ENCODE measurements at regions of chr1 and their contacts with region 1.

Region 1: DNA sequence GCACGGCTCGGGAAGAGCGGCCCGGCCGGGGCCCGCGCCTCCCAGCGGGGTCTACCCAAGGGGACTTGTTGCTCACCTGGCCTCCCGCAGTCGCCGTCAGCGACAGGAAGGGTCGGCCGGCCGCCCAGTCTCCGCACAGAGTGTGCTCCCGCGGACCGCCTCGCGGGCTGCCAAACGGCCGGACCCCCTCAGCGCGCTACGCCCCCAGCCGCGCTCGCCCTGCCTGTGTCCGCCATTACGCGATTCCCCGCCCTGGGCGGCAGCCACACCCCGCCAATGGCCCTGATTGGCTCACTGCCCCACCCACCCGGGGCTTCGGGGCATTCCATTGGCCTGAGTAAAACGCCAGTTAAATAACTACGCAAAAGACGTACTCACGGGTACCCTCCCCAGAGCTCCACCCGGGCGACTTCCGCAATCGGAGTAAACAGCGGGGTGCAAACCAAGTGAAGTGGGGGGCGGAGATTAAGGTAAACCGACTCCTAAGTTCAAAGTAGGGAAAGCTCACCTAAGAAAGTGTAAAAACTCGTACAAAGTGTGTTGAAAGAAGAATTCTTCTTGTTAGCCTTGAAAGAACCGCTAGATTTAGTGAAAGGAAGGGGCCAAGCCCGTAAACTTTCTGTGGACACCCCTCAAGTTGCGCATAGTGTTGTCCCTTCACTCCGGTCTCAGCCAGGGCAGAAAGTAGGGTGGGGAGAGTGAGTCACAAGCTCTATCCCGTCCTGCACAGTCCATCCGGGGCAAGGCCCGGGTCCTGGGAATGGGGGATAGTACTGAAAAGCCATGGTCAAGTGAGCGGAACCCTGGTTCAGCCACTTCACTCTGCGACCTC is at the start of gene WASF2:
- DNase-seq: peak; percentile 93 to 98 (median 95)
- ATAC-seq: peak; percentile 95
- H3K4me3 ChIP-seq: peak within 1 kb of the TSS; percentile 100
- H3K4me3 Mint-ChIP-seq: peak within 1 kb of the TSS; percentile 100
- H3K27ac ChIP-seq: peak within 1 kb of the TSS; percentile 73 to 98
- H3K27ac Mint-ChIP-seq: peak within 1 kb of the TSS; percentile 100
- H3K4me1 ChIP-seq: peaks cover 28% of the 10 kb centered on the region
- H3K4me1 Mint-ChIP-seq: peaks cover 29% of the 10 kb centered on the region
- H3K27me3 ChIP-seq: no peaks in the 10 kb centered on the region
- H3K27me3 Mint-ChIP-seq: no peaks in the 10 kb centered on the region
- CTCF ChIP-seq: no peak
- total RNA-seq, gene WASF2: 119 to 121 TPM

Region 2: DNA sequence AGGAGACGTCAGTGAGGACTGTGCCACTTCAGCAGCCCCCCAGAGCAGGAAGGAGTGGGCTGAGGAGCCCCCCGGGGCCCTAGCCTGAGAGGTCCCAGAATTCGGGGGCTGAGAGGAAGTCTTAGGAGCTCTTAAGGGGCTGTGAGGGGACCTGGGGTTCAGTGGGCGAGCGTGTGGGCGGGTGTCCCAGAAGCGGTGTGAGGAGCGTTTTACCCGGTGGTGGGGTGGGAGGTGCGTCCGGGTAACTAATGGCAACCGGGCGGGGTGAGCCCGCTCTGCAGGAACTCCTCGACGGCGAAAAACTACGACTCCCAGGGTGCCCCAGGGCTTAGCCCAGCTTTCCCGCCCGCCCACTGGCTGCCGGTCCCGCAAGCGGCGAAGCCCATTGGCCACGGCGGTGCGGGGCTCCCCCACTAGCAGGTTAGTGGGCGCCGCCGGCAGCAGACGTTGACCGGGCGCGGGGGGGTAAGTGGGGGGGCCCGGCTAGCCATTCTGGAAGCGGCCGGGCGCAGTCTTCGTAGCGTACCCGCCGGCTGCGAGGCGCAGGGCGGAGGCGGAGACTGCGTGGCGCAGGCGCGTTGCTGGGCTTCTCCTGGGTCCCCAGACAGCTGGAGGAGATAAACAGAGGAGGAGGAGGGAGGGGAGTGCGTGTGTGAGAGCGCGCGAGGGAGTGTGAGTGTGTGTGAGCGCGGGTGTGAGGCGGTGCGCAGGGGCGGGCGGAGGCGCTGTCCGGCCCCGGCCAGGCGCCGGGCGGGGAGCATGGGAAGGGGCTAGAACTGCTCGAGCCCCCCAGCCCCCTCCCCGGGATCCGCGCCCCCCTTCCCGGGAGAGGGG is 255.9 kb before region 1 on chr1 and contains the start of gene WDTC1:
- CTCF ChIA-PET with region 1: no interaction called
- POLR2A ChIA-PET with region 1: interaction called, 4 read pairs
- intact Hi-C with region 1: loop called in 1 of 2 experiments (anchors 2 kb)
- DNase-seq: peak; percentile 95 to 99 (median 98)
- ATAC-seq: peak; percentile 92
- H3K4me3 ChIP-seq: peak within 1 kb of the TSS; percentile 62
- H3K4me3 Mint-ChIP-seq: peak within 1 kb of the TSS; percentile 100
- H3K27ac ChIP-seq: peak within 1 kb of the TSS; percentile 70 to 73
- H3K27ac Mint-ChIP-seq: peak within 1 kb of the TSS; percentile 99
- H3K4me1 ChIP-seq: peaks cover 29% of the 10 kb centered on the region
- H3K4me1 Mint-ChIP-seq: peaks cover 38% of the 10 kb centered on the region
- H3K27me3 ChIP-seq: no peaks in the 10 kb centered on the region
- H3K27me3 Mint-ChIP-seq: peaks cover 4% of the 10 kb centered on the region
- CTCF ChIP-seq: no peak
- total RNA-seq, gene WDTC1: 17.7 to 18.6 TPM

Region 3: GRCh38 chr1:27430903-27431600 is 59.1 kb before region 1 on chr1:
- CTCF ChIA-PET with region 1: no interaction called
- POLR2A ChIA-PET with region 1: interaction called, 23 read pairs
- intact Hi-C with region 1: loop called in 1 of 2 experiments (anchors 5 kb)
- DNase-seq: peak in 9 of 14 experiments; percentile 7 to 83 (median 19)
- ATAC-seq: peak; percentile 87
- H3K4me3 ChIP-seq: peak overlapping the region; percentile 16
- H3K4me3 Mint-ChIP-seq: peak overlapping the region; percentile 74
- H3K27ac ChIP-seq: peak overlapping the region; percentile 46 to 56
- H3K27ac Mint-ChIP-seq: peak overlapping the region; percentile 86
- H3K4me1 ChIP-seq: peaks cover 90% of the 10 kb centered on the region
- H3K4me1 Mint-ChIP-seq: peaks cover 87% of the 10 kb centered on the region
- H3K27me3 ChIP-seq: no peaks in the 10 kb centered on the region
- H3K27me3 Mint-ChIP-seq: no peaks in the 10 kb centered on the region
- CTCF ChIP-seq: peak; percentile 4

Region 4: DNA sequence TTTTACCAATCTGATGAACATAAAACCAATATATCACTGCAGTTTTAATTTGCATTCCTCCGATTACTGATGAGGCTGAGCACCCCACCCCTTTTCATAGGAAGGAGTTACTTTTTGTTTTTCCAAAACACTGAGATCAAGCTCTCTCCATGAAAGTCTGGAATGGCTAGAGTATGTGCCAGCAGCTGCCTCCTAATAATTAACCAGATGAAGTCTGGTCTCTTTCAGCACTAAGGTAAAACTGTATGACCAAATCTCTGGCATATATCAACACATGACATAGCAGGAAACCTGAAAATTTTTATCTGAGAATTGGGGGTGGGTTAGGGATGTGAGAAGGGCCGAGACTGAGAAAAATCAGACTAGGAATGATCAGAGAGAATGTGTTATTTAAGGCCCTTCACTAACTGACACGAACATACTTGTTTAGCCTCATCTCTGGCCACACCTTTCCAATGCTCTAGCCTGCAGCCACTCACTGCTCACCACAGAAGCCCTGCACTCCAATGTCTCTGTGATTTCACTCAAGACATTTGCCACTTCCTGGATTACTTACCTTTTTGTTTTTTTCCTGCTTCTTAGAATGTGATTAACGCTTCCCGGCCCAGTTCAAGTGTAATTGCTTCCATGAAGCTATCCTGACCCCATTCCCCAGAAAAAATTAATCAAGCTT is 34.9 kb before region 1 on chr1:
- CTCF ChIA-PET with region 1: no interaction called
- POLR2A ChIA-PET with region 1: interaction called, 6 read pairs
- intact Hi-C with region 1: loop called in 1 of 2 experiments (anchors 5 kb)
- DNase-seq: peak in 9 of 14 experiments; percentile 6 to 63 (median 19)
- ATAC-seq: peak; percentile 80
- H3K4me3 ChIP-seq: peak overlapping the region; percentile 11
- H3K4me3 Mint-ChIP-seq: peak overlapping the region; percentile 30
- H3K27ac ChIP-seq: peak overlapping the region; percentile 46 to 53
- H3K27ac Mint-ChIP-seq: peak overlapping the region; percentile 75
- H3K4me1 ChIP-seq: peaks cover 22% of the 10 kb centered on the region
- H3K4me1 Mint-ChIP-seq: peaks cover 55% of the 10 kb centered on the region
- H3K27me3 ChIP-seq: no peaks in the 10 kb centered on the region
- H3K27me3 Mint-ChIP-seq: no peaks in the 10 kb centered on the region
- CTCF ChIP-seq: no peak

Region 5: GRCh38 chr1:27725374-27726173 is 235.4 kb after region 1 on chr1 and contains the start of gene FAM76A:
- CTCF ChIA-PET with region 1: no interaction called
- POLR2A ChIA-PET with region 1: interaction called, 15 read pairs
- intact Hi-C with region 1: no loop called
- DNase-seq: peak; percentile 99 to 100 (median 99)
- ATAC-seq: peak; percentile 92
- H3K4me3 ChIP-seq: peak within 1 kb of the TSS; percentile 74
- H3K4me3 Mint-ChIP-seq: peak within 1 kb of the TSS; percentile 85
- H3K27ac ChIP-seq: peak within 1 kb of the TSS; percentile 82 to 85
- H3K27ac Mint-ChIP-seq: peak within 1 kb of the TSS; percentile 89
- H3K4me1 ChIP-seq: peaks cover 19% of the 10 kb centered on the region
- H3K4me1 Mint-ChIP-seq: peaks cover 24% of the 10 kb centered on the region
- H3K27me3 ChIP-seq: no peaks in the 10 kb centered on the region
- H3K27me3 Mint-ChIP-seq: no peaks in the 10 kb centered on the region
- CTCF ChIP-seq: peak; percentile 60
- total RNA-seq, gene FAM76A: 26.0 to 28.7 TPM